ENCODE measurements at regions of chr10 and their contacts with region 1.

Region 1: GRCh38 chr10:74826142-74827044 is at the start of gene KAT6B:
- DNase-seq: peak; percentile 99 to 100 (median 100)
- ATAC-seq: peak; percentile 76
- H3K4me3 ChIP-seq: peak within 1 kb of the TSS; percentile 84 to 95
- H3K4me3 Mint-ChIP-seq: peak within 1 kb of the TSS; percentile 92
- H3K27ac ChIP-seq: peak within 1 kb of the TSS; percentile 84 to 89
- H3K27ac Mint-ChIP-seq: peak within 1 kb of the TSS; percentile 97
- H3K4me1 ChIP-seq: peaks cover 40% of the 10 kb centered on the region
- H3K4me1 Mint-ChIP-seq: peaks cover 69% of the 10 kb centered on the region
- H3K27me3 ChIP-seq: no peaks in the 10 kb centered on the region
- H3K27me3 Mint-ChIP-seq: no peaks in the 10 kb centered on the region
- CTCF ChIP-seq: no peak
- total RNA-seq, gene KAT6B: 73.0 to 74.7 TPM

Region 2: GRCh38 chr10:73810735-73811465 is 1015.5 kb before region 1 on chr10:
- CTCF ChIA-PET with region 1: no interaction called
- POLR2A ChIA-PET with region 1: no interaction called
- intact Hi-C with region 1: loop called in 1 of 2 experiments (anchors 5 kb)
- DNase-seq: peak; percentile 19 to 79 (median 66)
- ATAC-seq: peak; percentile 12
- H3K4me3 ChIP-seq: peak overlapping the region; percentile 56 to 87
- H3K4me3 Mint-ChIP-seq: peak overlapping the region; percentile 89
- H3K27ac ChIP-seq: peak overlapping the region; percentile 71 to 91
- H3K27ac Mint-ChIP-seq: peak overlapping the region; percentile 95
- H3K4me1 ChIP-seq: peaks cover 48% of the 10 kb centered on the region
- H3K4me1 Mint-ChIP-seq: peaks cover 44% of the 10 kb centered on the region
- H3K27me3 ChIP-seq: no peaks in the 10 kb centered on the region
- H3K27me3 Mint-ChIP-seq: no peaks in the 10 kb centered on the region
- CTCF ChIP-seq: no peak

Region 3: GRCh38 chr10:74151056-74151878 is 675.1 kb before region 1 on chr10 and contains the start of gene ADK:
- CTCF ChIA-PET with region 1: no interaction called
- POLR2A ChIA-PET with region 1: interaction called, 10 read pairs
- intact Hi-C with region 1: loop called in 1 of 2 experiments (anchors 1 kb)
- DNase-seq: peak; percentile 99 to 100 (median 100)
- ATAC-seq: peak; percentile 96
- H3K4me3 ChIP-seq: peak within 1 kb of the TSS; percentile 70 to 78
- H3K4me3 Mint-ChIP-seq: no peak within 1 kb of the TSS
- H3K27ac ChIP-seq: peak within 1 kb of the TSS; percentile 86 to 99
- H3K27ac Mint-ChIP-seq: no peak within 1 kb of the TSS
- H3K4me1 ChIP-seq: peaks cover 30% of the 10 kb centered on the region
- H3K4me1 Mint-ChIP-seq: peaks cover 42% of the 10 kb centered on the region
- H3K27me3 ChIP-seq: no peaks in the 10 kb centered on the region
- H3K27me3 Mint-ChIP-seq: no peaks in the 10 kb centered on the region
- CTCF ChIP-seq: peak; percentile 22
- total RNA-seq, gene ADK: 20.7 to 21.8 TPM

Region 4: DNA sequence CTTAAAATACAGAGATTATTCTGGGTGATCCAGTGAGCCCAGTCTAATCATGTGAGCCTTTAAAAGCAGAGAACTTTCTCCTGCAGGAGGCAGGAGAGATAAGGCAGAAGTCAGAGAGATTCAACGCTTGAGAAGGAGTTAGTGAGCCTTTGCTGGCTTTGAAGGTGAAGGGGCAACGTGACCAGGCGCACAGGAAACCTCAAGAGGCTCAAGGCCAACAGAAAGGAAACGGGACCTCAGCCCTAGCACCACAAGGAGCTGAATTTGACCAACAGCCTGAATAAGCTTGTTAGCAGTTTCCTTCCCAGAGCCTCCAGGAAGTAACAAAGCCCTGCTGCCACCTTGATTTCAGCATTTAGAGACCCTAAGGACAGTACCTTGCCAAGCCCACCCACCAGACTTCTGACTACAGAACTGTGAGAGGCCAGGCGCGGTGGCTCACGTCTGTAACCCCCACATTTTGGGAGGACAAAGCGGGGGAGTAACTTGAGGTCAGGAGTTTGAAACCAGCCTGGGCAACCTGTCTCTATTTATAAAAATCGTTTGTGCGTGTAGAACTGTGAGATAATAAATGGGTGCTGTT is 87.3 kb before region 1 on chr10:
- CTCF ChIA-PET with region 1: no interaction called
- POLR2A ChIA-PET with region 1: interaction called, 3 read pairs
- intact Hi-C with region 1: loop called in 1 of 2 experiments (anchors 5 kb)
- DNase-seq: peak in 6 of 9 experiments; percentile 2 to 68 (median 44)
- ATAC-seq: peak; percentile 71
- H3K4me3 ChIP-seq: no peak overlapping the region
- H3K4me3 Mint-ChIP-seq: peak overlapping the region; percentile 56
- H3K27ac ChIP-seq: peak overlapping the region in 1 of 2 experiments; percentile 59
- H3K27ac Mint-ChIP-seq: peak overlapping the region; percentile 86
- H3K4me1 ChIP-seq: peaks cover 19% of the 10 kb centered on the region
- H3K4me1 Mint-ChIP-seq: peaks cover 26% of the 10 kb centered on the region
- H3K27me3 ChIP-seq: no peaks in the 10 kb centered on the region
- H3K27me3 Mint-ChIP-seq: no peaks in the 10 kb centered on the region
- CTCF ChIP-seq: peak; percentile 33

Region 5: DNA sequence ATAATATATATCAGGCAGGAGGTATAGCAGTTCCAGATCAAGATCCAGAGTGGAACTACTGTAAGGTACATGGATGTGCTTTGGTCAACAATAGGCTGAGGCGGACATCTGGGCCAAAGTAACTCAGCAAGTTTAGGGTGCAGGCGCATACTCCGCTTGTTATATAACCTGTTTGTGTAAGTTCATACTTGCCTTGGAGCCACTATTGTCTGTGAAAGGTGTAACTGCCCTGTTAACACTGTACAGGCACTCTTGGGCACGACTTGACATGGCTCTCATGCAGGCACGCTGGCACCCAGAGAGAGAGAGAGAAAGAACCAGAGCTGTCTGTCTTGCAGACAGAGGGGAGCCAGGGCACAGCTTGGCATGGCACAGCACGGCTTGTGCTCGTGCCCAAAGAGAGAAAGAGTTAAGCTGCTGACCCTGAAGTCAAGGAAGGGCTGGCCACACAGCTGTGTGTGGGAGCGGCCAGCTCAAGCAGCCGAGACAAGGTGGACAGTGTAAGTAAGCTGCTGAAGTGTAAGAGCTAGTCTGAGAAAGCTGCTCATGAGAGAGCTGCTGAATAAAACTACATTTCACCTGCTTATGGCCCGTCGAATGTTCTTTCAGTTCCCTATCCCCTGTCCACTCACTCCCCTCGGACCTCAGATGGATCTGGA is 47.8 kb before region 1 on chr10:
- CTCF ChIA-PET with region 1: no interaction called
- POLR2A ChIA-PET with region 1: no interaction called
- intact Hi-C with region 1: no loop called
- DNase-seq: no peak
- ATAC-seq: no peak
- H3K4me3 ChIP-seq: no peak overlapping the region
- H3K4me3 Mint-ChIP-seq: no peak overlapping the region
- H3K27ac ChIP-seq: no peak overlapping the region
- H3K27ac Mint-ChIP-seq: no peak overlapping the region
- H3K4me1 ChIP-seq: no peaks in the 10 kb centered on the region
- H3K4me1 Mint-ChIP-seq: no peaks in the 10 kb centered on the region
- H3K27me3 ChIP-seq: no peaks in the 10 kb centered on the region
- H3K27me3 Mint-ChIP-seq: no peaks in the 10 kb centered on the region
- CTCF ChIP-seq: no peak

Region 6: DNA sequence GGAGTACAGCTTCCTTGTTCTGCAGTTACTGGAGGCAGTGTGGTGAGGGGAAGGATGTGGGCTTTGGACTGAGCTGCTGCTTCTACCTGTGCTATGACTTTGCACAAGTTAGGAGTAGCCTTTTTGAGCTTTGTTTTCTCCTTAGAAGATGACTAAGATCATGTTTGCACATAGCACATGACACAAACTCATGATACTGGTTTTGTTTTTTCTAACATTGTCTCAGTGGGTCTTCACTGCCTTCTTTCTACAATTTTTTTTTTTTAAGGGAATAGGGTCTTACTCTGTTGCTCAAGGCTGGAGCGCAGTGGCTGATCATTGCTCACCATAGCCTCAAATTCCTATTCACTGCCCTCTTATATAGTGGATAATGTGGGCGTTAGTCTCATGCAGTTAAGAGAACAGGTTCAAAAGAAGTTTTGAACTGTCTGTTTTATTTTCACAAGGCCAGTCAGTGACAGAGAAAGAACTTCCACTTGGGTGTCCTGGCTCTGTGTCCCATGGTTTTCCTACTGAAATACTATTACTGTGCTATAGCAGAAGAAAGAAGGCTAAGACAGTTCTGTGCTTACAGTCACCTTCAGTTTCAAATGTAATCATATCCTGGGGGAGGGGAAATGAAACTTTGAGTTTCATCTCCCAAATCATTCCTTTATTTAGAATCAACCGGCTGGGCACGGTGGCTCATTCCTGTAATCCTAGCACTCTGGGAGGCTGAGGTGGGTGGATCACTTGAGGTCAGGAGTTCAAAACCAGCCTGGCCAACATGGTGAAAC is 72.0 kb after region 1 on chr10:
- CTCF ChIA-PET with region 1: no interaction called
- POLR2A ChIA-PET with region 1: no interaction called
- intact Hi-C with region 1: loop called in 1 of 2 experiments (anchors 5 kb)
- DNase-seq: peak in 3 of 9 experiments; percentile 16 to 40 (median 17)
- ATAC-seq: peak; percentile 60
- H3K4me3 ChIP-seq: no peak overlapping the region
- H3K4me3 Mint-ChIP-seq: peak overlapping the region; percentile 8
- H3K27ac ChIP-seq: peak overlapping the region in 1 of 2 experiments; percentile 57
- H3K27ac Mint-ChIP-seq: peak overlapping the region; percentile 68
- H3K4me1 ChIP-seq: peaks cover 39% of the 10 kb centered on the region
- H3K4me1 Mint-ChIP-seq: peaks cover 78% of the 10 kb centered on the region
- H3K27me3 ChIP-seq: no peaks in the 10 kb centered on the region
- H3K27me3 Mint-ChIP-seq: no peaks in the 10 kb centered on the region
- CTCF ChIP-seq: no peak

Region 7: DNA sequence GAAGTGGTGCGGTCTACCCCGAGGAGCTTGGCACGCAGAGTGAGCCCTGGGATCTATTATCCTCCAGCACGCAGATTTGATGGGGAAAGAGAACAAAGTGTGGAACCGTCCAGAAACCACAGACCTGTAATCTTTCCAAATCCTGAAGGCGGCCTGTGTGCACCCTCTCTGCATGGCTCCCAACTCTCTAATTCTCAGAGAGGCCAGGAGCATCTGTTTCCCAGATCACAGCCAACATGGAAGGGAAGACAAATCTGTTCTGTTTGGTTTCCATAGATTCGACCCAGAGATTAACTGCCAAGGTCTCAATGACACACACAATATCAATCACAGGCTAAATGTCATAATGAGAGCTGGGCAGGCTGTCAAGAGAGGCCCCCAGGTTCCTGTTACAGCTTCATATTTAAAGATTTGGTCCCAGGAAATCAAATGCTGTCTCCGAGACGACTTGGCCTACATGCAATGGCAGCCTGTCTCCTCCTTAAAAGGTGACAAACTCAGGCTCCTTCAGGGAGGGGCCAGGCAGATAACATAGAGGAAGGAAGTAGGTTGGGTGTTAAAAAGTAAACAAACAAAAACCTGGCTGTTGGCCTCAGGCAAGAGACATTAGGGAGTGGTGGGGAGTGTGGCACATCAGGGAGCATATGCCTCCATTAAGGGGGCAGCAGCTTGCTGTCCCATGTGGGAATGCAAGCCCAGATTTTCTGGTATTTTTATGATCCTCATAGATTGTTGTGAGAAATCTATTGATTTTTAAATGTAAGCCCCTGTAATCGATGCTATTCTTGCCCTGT is 236.3 kb after region 1 on chr10:
- CTCF ChIA-PET with region 1: no interaction called
- POLR2A ChIA-PET with region 1: no interaction called
- intact Hi-C with region 1: no loop called
- DNase-seq: no peak
- ATAC-seq: no peak
- H3K4me3 ChIP-seq: no peak overlapping the region
- H3K4me3 Mint-ChIP-seq: no peak overlapping the region
- H3K27ac ChIP-seq: no peak overlapping the region
- H3K27ac Mint-ChIP-seq: no peak overlapping the region
- H3K4me1 ChIP-seq: no peaks in the 10 kb centered on the region
- H3K4me1 Mint-ChIP-seq: no peaks in the 10 kb centered on the region
- H3K27me3 ChIP-seq: no peaks in the 10 kb centered on the region
- H3K27me3 Mint-ChIP-seq: no peaks in the 10 kb centered on the region
- CTCF ChIP-seq: no peak

Region 8: GRCh38 chr10:75165684-75166622 is 339.6 kb after region 1 on chr10:
- CTCF ChIA-PET with region 1: no interaction called
- POLR2A ChIA-PET with region 1: no interaction called
- intact Hi-C with region 1: no loop called
- DNase-seq: peak in 2 of 9 experiments; percentile 46 to 64
- ATAC-seq: peak; percentile 58
- H3K4me3 ChIP-seq: no peak overlapping the region
- H3K4me3 Mint-ChIP-seq: peak overlapping the region; percentile 72
- H3K27ac ChIP-seq: peak overlapping the region in 1 of 2 experiments; percentile 63
- H3K27ac Mint-ChIP-seq: peak overlapping the region; percentile 89
- H3K4me1 ChIP-seq: peaks cover 24% of the 10 kb centered on the region
- H3K4me1 Mint-ChIP-seq: peaks cover 48% of the 10 kb centered on the region
- H3K27me3 ChIP-seq: no peaks in the 10 kb centered on the region
- H3K27me3 Mint-ChIP-seq: no peaks in the 10 kb centered on the region
- CTCF ChIP-seq: no peak

Region 9: DNA sequence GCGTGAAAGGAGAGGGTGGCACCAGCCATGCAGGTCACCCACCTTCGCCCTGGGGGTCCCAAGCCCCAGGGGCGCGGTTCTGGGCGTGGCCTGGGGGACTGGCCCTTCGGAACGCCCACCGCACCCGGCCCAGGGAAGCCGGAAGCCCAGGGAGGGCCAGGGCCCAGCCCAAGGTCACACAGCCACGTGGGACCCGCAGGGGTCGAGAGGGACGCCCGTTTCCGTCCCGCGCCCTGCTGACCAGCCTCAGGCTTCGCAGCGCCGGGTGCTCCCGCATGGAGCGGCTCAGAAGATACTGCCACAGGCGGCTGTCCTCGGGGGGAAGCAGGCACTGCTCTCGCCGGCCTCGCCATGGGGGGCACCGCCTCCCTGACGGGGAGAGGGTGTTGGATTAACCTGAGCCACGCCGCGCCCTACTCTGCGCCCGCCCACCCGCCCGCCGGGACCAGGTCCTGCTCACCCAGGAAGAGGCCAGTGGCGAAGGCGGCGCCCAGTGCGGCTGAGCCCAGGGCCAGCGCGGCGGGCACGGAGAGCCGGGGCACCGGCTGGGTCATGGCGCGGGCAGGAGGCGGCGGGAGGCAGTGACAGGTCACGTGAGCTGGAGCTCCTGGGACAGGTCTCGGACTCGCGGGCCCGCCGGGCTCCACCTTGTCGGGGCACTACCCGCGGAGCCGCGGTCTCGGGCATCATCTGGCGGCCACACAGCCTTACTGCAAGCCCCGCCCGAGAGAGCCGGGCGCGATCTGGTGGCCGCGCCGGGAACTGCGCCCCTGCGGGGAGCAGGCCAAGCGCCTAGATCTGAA is 409.2 kb after region 1 on chr10 and contains the start of gene COMTD1:
- CTCF ChIA-PET with region 1: no interaction called
- POLR2A ChIA-PET with region 1: no interaction called
- intact Hi-C with region 1: loop called in 1 of 2 experiments (anchors 1 kb)
- DNase-seq: peak; percentile 90 to 96 (median 92)
- ATAC-seq: peak; percentile 66
- H3K4me3 ChIP-seq: peak within 1 kb of the TSS; percentile 68 to 73
- H3K4me3 Mint-ChIP-seq: peak within 1 kb of the TSS; percentile 82
- H3K27ac ChIP-seq: peak within 1 kb of the TSS; percentile 52 to 66
- H3K27ac Mint-ChIP-seq: peak within 1 kb of the TSS; percentile 80
- H3K4me1 ChIP-seq: peaks cover 14% of the 10 kb centered on the region
- H3K4me1 Mint-ChIP-seq: peaks cover 20% of the 10 kb centered on the region
- H3K27me3 ChIP-seq: no peaks in the 10 kb centered on the region
- H3K27me3 Mint-ChIP-seq: no peaks in the 10 kb centered on the region
- CTCF ChIP-seq: peak; percentile 100
- total RNA-seq, gene COMTD1: 7.6 to 7.9 TPM

Region 10: DNA sequence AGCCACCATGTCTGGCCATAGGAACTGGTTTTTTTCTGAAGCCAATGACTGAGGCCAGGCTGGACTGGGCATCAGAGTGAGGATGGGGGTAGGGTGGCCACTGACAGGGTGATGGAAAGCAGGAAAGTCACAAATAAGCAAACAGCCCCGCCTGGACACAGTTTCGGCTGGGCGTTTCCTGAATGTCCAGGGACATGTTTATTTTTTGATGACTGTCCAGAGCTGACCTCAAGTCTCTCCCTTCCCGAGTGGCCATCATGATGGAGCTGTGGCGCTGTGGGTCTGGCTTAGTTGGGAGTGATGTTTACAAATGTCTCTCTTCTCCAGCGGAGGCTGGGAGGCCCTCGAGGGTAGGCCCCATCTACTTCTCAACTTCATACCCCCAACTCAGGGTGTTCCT is 446.5 kb after region 1 on chr10:
- CTCF ChIA-PET with region 1: no interaction called
- POLR2A ChIA-PET with region 1: no interaction called
- intact Hi-C with region 1: no loop called
- DNase-seq: no peak
- ATAC-seq: no peak
- H3K4me3 ChIP-seq: no peak overlapping the region
- H3K4me3 Mint-ChIP-seq: no peak overlapping the region
- H3K27ac ChIP-seq: no peak overlapping the region
- H3K27ac Mint-ChIP-seq: no peak overlapping the region
- H3K4me1 ChIP-seq: no peaks in the 10 kb centered on the region
- H3K4me1 Mint-ChIP-seq: no peaks in the 10 kb centered on the region
- H3K27me3 ChIP-seq: peaks cover 0 to 3% of the 10 kb centered on the region in 2 experiments
- H3K27me3 Mint-ChIP-seq: peaks cover 11% of the 10 kb centered on the region
- CTCF ChIP-seq: no peak

Measured in CD8-positive, alpha-beta T cell (primary cell).